ENCODE measurements at regions of chr10 and their contacts with region 1.

Region 1: DNA sequence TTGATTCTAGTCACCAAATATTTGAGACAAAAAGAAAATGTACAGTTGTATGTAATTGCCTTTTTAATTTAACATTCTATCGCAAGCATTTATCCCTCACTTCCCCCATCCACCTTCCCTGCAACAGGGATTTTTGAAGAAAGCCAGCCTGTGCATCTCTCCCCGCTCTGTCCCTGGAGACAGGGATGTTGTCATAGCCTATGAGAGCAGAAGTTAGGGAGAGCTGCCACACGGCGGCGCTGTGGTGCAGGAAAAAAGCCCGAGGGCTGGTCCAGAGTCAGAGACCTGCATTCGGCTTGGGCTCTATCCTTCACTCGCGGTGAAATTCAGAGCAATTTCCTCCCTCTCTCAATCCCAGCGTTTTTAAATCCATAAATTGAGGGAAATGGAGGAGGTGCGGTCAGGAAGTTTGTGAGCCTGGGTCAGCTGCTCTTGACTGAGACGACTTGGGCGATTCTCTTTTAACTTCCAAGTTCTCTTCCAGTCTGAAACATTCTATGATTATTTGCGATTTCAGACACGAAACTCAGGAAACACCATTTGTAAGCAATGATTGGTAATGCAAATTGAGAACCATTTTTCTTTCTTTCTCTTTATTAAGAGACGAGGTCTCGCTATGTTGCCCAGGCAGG is 17.5 kb downstream of the HKDC1 start:
- DNase-seq: peak; percentile 64 to 83 (median 73)
- H3K4me3 ChIP-seq: peak overlapping the region in 1 of 7 experiments; percentile 52
- H3K27ac ChIP-seq: no peak overlapping the region
- H3K4me1 ChIP-seq: peaks cover 2 to 16% (median 8%) of the 10 kb centered on the region in 4 experiments
- H3K27me3 ChIP-seq: no peaks in the 10 kb centered on the region

Region 2: GRCh38 chr10:69224862-69225657 is 12.6 kb before region 1 on chr10:
- CTCF ChIA-PET with region 1: interaction called, 11 read pairs
- POLR2A ChIA-PET with region 1: no interaction called
- DNase-seq: peak in 2 of 3 donors; percentile 32 to 47
- H3K4me3 ChIP-seq: no peak overlapping the region
- H3K27ac ChIP-seq: no peak overlapping the region
- H3K4me1 ChIP-seq: peaks cover 0 to 59% (median 49%) of the 10 kb centered on the region in 4 experiments
- H3K27me3 ChIP-seq: no peaks in the 10 kb centered on the region

Region 3: GRCh38 chr10:69382382-69383117 is 144.9 kb after region 1 on chr10:
- CTCF ChIA-PET with region 1: interaction called, 209 read pairs
- POLR2A ChIA-PET with region 1: no interaction called
- DNase-seq: no peak
- H3K4me3 ChIP-seq: no peak overlapping the region
- H3K27ac ChIP-seq: no peak overlapping the region
- H3K4me1 ChIP-seq: no peaks in the 10 kb centered on the region
- H3K27me3 ChIP-seq: no peaks in the 10 kb centered on the region

Region 4: DNA sequence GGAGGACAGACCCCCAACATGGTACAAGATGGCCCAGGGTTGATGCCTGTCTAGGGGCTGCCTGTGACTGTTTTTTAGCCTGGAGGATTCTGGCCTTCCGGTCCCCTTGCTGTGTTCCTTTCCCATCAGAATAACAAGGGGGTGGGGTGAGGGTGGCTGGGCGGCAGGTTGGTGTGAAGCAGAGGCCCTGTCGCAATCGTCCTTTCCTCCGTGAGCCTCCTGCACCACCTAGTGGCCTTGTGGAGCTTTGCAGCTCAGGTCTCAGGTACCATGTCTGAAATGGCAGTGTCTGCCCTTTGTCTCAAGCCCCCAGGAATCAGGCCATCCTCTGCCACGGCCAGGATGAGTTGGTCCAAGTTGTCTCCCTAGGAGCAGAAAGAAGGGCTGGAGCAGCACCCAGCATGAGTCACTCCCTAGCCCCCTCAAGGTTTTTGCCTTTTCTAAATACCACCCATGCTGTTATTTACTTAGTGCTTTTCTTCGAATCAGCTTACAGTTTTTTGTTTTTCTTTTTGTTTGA is 154.9 kb after region 1 on chr10:
- CTCF ChIA-PET with region 1: interaction called, 209 read pairs
- POLR2A ChIA-PET with region 1: no interaction called
- DNase-seq: peak; percentile 78 to 90 (median 84)
- H3K4me3 ChIP-seq: no peak overlapping the region
- H3K27ac ChIP-seq: no peak overlapping the region
- H3K4me1 ChIP-seq: peaks cover 0 to 18% (median 18%) of the 10 kb centered on the region in 4 experiments
- H3K27me3 ChIP-seq: no peaks in the 10 kb centered on the region